ENCODE measurements at regions of chr15 and their contacts with region 1.

Region 1: DNA sequence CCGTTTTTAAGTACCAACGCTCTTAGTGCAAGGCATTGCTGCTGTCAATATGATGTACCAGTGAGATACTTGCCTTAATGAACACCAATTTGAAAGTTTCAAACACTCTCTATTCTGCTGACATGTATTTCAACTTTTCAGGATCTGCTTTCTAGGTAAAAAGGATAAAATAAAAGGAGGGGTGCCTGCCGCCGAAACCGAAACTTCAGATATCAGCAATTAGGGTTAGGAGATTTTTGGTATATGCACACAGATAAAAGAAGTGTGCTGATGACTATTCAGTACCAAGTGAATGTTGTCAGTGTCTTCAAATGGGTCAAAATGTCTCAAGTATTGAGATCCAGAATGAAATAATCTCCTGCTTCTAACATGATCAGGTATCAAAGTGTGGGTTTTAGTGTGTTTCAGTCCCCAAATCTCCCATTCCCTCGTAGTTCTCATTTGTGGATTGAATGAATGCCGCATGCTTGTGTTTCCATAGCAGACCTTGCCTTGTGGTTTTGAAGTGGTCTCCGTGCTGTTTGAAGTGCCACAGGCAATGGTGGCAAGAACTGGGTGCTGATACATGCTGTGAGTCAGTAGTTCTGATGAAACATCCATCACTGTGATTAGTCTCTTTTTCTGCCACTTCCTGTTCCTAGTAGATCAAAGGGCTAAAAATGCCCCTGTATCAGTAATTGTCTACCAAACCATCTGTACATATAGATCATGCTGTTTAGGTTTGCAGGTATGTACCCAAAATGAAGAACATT is 22.5 kb downstream of the CHST14 start:
- DNase-seq: peak; percentile 83
- ATAC-seq: peak; percentile 95
- H3K4me3 Mint-ChIP-seq: peak overlapping the region; percentile 13
- H3K27ac Mint-ChIP-seq: peak overlapping the region; percentile 86
- H3K4me1 Mint-ChIP-seq: peaks cover 35% of the 10 kb centered on the region
- H3K27me3 Mint-ChIP-seq: peaks cover 3% of the 10 kb centered on the region

Region 2: DNA sequence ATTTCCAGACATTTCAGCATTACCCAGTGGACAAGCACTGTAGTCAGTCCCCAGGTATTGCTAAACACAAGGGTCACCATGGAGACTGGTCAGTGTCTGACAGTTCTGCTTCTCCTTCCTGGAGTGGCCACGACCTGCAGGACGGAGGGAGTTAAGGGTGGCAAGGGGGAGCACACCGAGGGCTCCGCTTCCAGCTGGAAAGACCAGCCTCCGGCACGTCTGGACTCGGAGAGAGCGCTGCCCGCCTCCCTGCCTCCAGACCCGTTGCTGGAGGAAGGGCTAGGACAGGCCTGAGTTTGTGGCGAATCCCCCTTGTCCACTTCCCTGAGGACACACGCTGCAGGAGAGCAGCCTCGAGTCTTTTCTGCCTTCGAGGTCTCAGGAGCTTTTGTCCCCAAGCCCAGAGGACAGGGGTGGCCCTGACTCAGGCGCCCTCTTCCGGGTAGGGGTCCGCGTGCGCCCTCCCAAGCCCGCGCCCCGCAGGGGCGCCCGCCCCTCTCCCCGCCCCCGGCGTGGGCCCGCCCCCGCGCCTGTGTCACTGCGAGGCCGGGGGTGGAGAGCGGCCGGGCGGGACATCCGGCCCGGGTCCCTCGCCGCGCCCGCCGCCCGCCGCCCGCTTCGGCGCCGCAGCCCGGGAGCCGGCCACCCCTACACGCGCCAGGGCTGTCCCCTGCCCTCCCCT is 22.7 kb before region 1 on chr15 and contains the start of gene CHST14:
- CTCF ChIA-PET with region 1: interaction called, 3 read pairs
- POLR2A ChIA-PET with region 1: no interaction called
- intact Hi-C with region 1: loop called in 1 of 2 experiments (anchors 2 kb)
- DNase-seq: peak; percentile 64
- ATAC-seq: peak; percentile 58
- H3K4me3 Mint-ChIP-seq: peak within 1 kb of the TSS; percentile 76
- H3K27ac Mint-ChIP-seq: peak within 1 kb of the TSS; percentile 74
- H3K4me1 Mint-ChIP-seq: peaks cover 23% of the 10 kb centered on the region
- H3K27me3 Mint-ChIP-seq: no peaks in the 10 kb centered on the region
- total RNA-seq, gene CHST14: 5.4 to 6.2 TPM

Region 3: GRCh38 chr15:40593588-40594428 is 100.5 kb after region 1 on chr15 and contains the start of gene KNL1:
- CTCF ChIA-PET with region 1: no interaction called
- POLR2A ChIA-PET with region 1: interaction called, 10 read pairs
- intact Hi-C with region 1: no loop called
- DNase-seq: peak; percentile 94
- ATAC-seq: peak; percentile 86
- H3K4me3 Mint-ChIP-seq: peak within 1 kb of the TSS; percentile 87
- H3K27ac Mint-ChIP-seq: peak within 1 kb of the TSS; percentile 95
- H3K4me1 Mint-ChIP-seq: peaks cover 24% of the 10 kb centered on the region
- H3K27me3 Mint-ChIP-seq: peaks cover 6% of the 10 kb centered on the region
- total RNA-seq, gene KNL1: 26.2 to 33.5 TPM